Psoas muscle (tissue), 8 donors: ENCODE measurements at regions of chr1 and their contacts with region 1.

Region 1: GRCh38 chr1:15923241-15923640 is 52.7 kb downstream of the ZBTB17 start:
- DNase-seq: no peak
- ATAC-seq: no peak
- H3K4me3 ChIP-seq: no peak overlapping the region
- H3K27ac ChIP-seq: no peak overlapping the region
- H3K4me1 ChIP-seq: no peaks in the 10 kb centered on the region
- H3K27me3 ChIP-seq: no peaks in the 10 kb centered on the region
- CTCF ChIP-seq: no peak

Region 2: DNA sequence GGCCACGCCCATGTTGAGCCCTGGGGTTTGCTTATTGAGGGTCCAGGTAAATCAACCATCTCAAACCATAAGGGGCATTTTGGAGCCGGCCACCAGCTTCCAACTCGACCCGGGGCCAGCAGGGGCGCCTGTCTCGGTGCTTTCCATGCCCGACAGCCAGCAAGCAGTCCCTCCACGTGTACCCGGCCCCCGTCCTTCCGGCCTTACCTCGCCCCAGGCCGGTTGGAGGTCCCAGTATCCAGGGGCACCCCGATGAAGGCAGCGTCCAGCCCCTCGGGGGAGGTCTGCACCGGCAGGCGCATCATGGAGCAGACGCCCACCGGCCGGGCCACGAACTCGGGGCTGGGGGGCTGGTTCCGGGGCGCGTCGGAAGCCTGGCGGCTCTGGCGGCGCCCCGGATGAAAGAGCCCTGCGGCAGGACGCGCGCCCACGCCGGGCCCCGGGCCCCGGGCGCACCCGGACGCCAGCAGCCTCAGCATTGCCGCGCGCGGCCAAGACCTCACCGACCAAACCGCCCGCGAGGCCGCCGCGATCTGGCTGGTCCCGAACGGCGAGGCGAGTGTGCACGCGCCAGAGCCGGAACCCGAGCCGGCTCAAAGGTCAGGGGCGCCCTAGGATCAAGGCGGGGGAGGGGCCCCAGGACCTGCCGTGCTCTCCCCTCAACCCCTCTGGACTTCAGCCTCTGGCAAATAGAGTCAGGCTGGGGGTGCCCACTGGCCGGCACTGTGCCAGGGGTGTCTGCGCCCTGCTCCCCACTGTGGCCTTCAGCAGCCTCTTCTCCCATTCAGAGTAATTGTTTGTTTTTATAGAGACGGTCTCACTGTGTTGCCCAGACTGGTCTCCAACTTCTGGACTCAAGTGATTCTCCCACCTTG is 338.5 kb before region 1 on chr1 and contains the start of gene AGMAT:
- intact Hi-C with region 1: no loop called
- DNase-seq: peak; percentile 50 to 63
- ATAC-seq: peak; percentile 43 to 53 (median 46)
- H3K4me3 ChIP-seq: peak within 1 kb of the TSS; percentile 62
- H3K27ac ChIP-seq: peak within 1 kb of the TSS; percentile 95
- H3K4me1 ChIP-seq: peaks cover 42% of the 10 kb centered on the region
- H3K27me3 ChIP-seq: no peaks in the 10 kb centered on the region
- CTCF ChIP-seq: peak; percentile 29
- total RNA-seq, gene AGMAT: 2.6 to 12.6 (median 3.4) TPM

Region 3: GRCh38 chr1:15902882-15903281 is 20.4 kb before region 1 on chr1:
- intact Hi-C with region 1: no loop called
- DNase-seq: no peak
- ATAC-seq: peak; percentile 85 to 87 (median 85)
- H3K4me3 ChIP-seq: peak overlapping the region; percentile 43
- H3K27ac ChIP-seq: peak overlapping the region; percentile 91
- H3K4me1 ChIP-seq: peaks cover 76% of the 10 kb centered on the region
- H3K27me3 ChIP-seq: no peaks in the 10 kb centered on the region
- CTCF ChIP-seq: no peak

Region 4: DNA sequence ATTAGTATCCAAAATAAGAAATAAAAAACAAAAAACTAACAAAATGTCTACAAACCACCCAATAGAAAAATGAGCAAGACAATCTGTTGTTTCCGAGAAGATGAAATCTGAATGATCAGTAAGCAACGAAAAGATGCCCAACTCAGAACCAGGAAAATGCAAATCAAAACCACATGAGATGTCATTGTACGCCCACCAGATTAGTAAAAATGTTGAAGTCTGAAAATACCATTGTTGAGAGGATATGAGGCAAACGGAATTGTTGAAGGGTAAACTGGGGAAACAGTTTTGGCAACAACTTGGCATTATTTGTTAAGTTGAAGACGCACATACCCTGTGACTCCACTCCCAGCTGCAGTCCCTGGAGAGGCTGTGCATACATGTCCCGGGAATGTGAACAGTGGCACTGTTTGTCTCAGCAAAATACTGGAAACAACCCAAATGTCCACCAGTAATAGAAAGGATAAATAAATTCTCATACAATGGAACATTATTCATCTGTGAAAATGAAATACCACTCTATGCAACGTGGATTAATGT is 42.1 kb after region 1 on chr1:
- intact Hi-C with region 1: loop called in 1 of 2 experiments (anchors 2 kb)
- DNase-seq: peak in 1 of 2 donors; percentile 46
- ATAC-seq: peak in 3 of 4 donors; percentile 55 to 66 (median 60)
- H3K4me3 ChIP-seq: no peak overlapping the region
- H3K27ac ChIP-seq: no peak overlapping the region
- H3K4me1 ChIP-seq: peaks cover 13% of the 10 kb centered on the region
- H3K27me3 ChIP-seq: no peaks in the 10 kb centered on the region
- CTCF ChIP-seq: no peak